Transverse colon (tissue), 4 donors: ENCODE measurements at regions of chr1 and their contacts with region 1.

Region 1: GRCh38 chr1:162878000-162878596 is 17.1 kb upstream of the CCDC190 start:
- DNase-seq: peak; percentile 41
- H3K4me3 ChIP-seq: no peak overlapping the region
- H3K27ac ChIP-seq: no peak overlapping the region
- H3K4me1 ChIP-seq: no peaks in the 10 kb centered on the region
- H3K27me3 ChIP-seq: no peaks in the 10 kb centered on the region
- CTCF ChIP-seq: peak; percentile 41 to 59 (median 47)
- EP300 ChIP-seq: no peak
- POLR2A ChIP-seq: no peak

Region 2: GRCh38 chr1:163054181-163054591 is 176.1 kb after region 1 on chr1:
- in situ Hi-C with region 1: no loop called
- intact Hi-C with region 1: no loop called
- DNase-seq: no peak
- H3K4me3 ChIP-seq: no peak overlapping the region
- H3K27ac ChIP-seq: no peak overlapping the region
- H3K4me1 ChIP-seq: no peaks in the 10 kb centered on the region
- H3K27me3 ChIP-seq: no peaks in the 10 kb centered on the region
- CTCF ChIP-seq: no peak
- EP300 ChIP-seq: no peak
- POLR2A ChIP-seq: no peak

Region 3: DNA sequence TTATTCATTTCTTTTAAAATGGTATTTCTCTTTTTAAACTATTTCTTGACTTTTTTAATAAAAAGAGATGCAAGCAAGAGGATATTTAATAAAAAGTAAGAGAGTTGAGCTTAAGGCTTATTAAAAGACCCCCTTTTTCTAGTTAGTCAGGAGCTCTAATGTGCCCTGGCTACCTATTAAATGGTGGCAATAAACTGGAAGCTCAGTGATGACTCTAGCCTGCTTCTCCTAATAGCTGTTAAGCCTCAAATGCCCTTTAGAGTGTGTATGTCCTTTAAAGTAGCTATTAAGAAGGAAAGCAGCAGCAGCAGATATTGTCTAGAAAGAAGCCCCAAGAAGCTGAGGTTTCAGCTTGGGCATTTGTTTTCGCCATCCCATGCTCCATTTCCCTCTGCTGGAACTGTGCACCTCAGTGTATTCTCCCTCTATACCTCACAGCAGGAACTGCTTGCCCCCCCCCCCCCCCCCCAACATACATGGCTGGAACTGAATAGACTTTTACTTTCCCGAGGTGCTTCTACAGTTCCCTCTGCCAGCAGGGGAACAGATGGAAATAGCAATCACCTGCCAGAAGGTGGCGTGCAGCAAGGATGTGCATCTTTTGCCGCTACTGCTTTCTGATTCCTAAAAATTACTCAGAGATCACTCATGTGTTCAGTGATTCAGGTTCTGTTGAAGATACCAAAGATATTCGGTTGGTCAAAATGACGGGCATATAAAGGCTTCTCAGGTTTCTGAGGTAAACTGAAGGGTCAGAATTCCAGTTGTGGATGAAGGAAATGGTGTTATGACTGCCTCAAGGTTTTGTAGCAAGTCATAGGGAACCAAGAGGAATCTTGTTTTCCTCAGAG is 193.5 kb after region 1 on chr1:
- in situ Hi-C with region 1: no loop called
- intact Hi-C with region 1: loop called (anchors 10 kb)
- DNase-seq: peak; percentile 46
- H3K4me3 ChIP-seq: no peak overlapping the region
- H3K27ac ChIP-seq: peak overlapping the region in 2 of 4 donors; percentile 8 to 36
- H3K4me1 ChIP-seq: no peaks in the 10 kb centered on the region
- H3K27me3 ChIP-seq: peaks cover 36% of the 10 kb centered on the region
- CTCF ChIP-seq: peak; percentile 42 to 55 (median 50)
- EP300 ChIP-seq: no peak
- POLR2A ChIP-seq: no peak

Region 4: DNA sequence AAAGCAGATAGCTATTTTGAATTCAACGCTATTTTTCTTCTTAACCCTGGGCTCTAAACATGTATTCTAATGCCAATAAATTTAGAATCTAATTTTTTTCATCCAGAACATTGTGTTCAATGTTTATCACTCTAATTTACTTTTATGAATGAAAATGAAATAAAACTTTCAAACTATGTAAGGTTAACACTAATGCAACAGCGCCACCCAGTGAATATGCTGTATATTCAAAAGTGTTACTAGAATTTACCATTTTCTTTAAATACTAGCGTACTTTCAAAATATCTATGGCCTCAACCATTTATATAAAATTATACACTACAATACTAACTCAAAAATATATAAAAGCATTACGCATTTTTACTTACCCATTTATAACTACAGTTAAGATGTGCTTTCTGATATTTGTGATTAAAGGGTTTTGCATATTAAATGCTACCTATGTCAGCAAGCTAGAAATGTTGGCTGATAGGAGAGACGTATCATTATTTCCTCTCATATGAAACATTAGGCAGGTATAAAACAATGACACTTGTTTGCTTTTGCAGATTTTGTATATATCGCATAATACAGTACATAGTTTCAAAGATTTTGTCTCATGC is 437.8 kb after region 1 on chr1:
- in situ Hi-C with region 1: loop called in 2 of 4 experiments (anchors 25 kb)
- intact Hi-C with region 1: loop called (anchors 10 kb)
- DNase-seq: peak; percentile 16
- H3K4me3 ChIP-seq: no peak overlapping the region
- H3K27ac ChIP-seq: no peak overlapping the region
- H3K4me1 ChIP-seq: peaks cover 0 to 3% (median 2%) of the 10 kb centered on the region in 4 donors
- H3K27me3 ChIP-seq: no peaks in the 10 kb centered on the region
- CTCF ChIP-seq: peak; percentile 57 to 69 (median 66)
- EP300 ChIP-seq: no peak
- POLR2A ChIP-seq: no peak

Region 5: DNA sequence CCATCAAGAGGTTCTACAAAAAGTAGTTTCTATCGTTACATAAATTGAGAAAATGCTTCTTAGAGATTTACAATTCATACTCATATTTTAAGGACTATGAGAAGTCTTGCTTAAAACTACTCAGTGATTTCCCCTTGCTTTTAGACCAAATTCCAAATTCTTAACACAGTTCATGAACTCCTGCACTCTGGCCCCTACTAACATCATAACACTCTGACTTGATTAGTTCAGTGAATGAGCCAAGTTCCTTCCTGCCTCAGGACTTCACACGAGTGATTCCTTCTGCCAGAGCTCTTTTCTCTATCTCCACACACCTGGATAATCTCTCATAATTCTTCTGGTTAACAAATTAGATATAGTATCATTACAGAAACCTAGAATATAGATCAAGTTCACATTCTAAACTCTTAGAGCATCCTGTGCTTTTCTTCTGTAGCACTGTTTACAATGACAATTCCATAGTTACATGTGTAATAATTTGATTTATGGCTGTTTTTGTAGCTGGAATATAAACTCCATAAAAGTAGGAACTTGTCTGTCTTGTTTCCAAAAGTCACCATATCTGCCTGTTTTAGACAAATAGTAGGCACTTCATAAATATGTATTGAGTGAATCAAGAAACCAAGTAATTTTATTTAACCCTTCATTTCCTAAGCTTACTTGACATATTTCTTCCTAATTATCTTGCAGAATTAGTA is 503.5 kb after region 1 on chr1:
- in situ Hi-C with region 1: no loop called
- intact Hi-C with region 1: no loop called
- DNase-seq: no peak
- H3K4me3 ChIP-seq: no peak overlapping the region
- H3K27ac ChIP-seq: peak overlapping the region in 3 of 4 donors; percentile 48 to 57 (median 50)
- H3K4me1 ChIP-seq: peaks cover 0 to 21% (median 14%) of the 10 kb centered on the region in 4 donors
- H3K27me3 ChIP-seq: no peaks in the 10 kb centered on the region
- CTCF ChIP-seq: no peak
- EP300 ChIP-seq: no peak
- POLR2A ChIP-seq: no peak